ENCODE measurements at regions of chr3 and their contacts with region 1.

Region 1: DNA sequence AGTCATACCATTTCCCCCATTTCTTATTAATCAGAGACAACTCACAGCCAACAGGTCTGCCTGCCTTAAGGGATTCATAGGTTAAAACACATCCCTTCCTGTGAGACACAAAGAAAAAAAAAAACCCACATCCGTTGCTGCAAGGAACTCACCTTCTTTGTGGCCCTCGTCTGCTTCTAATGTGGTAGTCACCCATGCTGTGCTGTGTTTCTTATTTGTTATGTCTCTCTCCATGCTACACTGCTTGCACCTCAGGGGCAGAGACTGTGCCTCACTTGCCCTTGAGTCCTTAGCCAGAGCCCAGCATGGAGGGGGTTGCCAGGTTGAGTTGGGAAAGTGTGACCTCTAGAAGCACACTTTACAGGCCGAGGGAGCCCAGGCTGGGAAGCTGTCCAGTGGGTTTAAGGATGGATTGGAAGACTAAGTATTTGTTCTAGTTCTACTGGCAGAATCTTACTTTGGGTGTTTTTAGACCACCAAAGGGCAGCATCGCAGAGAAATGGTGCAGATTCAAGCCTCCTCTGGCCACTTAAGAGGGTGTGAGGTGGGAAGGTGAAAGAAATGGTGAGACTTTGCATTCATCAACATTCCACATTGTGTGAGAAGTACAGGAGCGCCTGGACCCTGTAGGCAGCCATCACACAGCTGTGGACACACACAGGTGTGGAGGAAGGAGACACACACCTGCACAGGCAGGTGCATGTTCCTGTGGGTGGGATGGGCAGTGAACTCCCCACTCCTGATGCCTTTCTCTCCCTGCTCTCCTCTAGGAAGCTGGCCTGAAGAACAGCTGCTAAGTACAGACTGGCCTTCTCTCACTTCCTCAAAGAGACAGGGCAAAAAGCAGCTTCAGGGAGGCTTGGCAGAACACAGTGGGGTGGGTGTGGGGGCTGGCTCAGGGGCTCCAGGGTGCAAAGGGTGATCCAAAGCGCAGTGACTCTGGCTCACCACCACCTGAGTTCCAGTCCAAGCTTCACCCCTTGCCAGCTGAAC is 48.8 kb downstream of the GLB1 start:
- DNase-seq: peak in 13 of 14 experiments; percentile 38 to 88 (median 52)
- ATAC-seq: peak; percentile 88
- H3K4me3 ChIP-seq: peak overlapping the region; percentile 15
- H3K4me3 Mint-ChIP-seq: peak overlapping the region; percentile 82
- H3K27ac ChIP-seq: peak overlapping the region; percentile 36 to 54
- H3K27ac Mint-ChIP-seq: peak overlapping the region; percentile 85
- H3K4me1 ChIP-seq: peaks cover 65% of the 10 kb centered on the region
- H3K4me1 Mint-ChIP-seq: peaks cover 80% of the 10 kb centered on the region
- H3K27me3 ChIP-seq: no peaks in the 10 kb centered on the region
- H3K27me3 Mint-ChIP-seq: no peaks in the 10 kb centered on the region
- CTCF ChIP-seq: no peak

Region 2: GRCh38 chr3:32960404-32961170 is 87.6 kb before region 1 on chr3:
- CTCF ChIA-PET with region 1: no interaction called
- POLR2A ChIA-PET with region 1: interaction called, 4 read pairs
- intact Hi-C with region 1: loop called in 1 of 2 experiments (anchors 5 kb)
- DNase-seq: peak in 3 of 14 experiments; percentile 60 to 71 (median 66)
- ATAC-seq: no peak
- H3K4me3 ChIP-seq: no peak overlapping the region
- H3K4me3 Mint-ChIP-seq: peak overlapping the region; percentile 65
- H3K27ac ChIP-seq: no peak overlapping the region
- H3K27ac Mint-ChIP-seq: peak overlapping the region; percentile 80
- H3K4me1 ChIP-seq: peaks cover 30% of the 10 kb centered on the region
- H3K4me1 Mint-ChIP-seq: peaks cover 35% of the 10 kb centered on the region
- H3K27me3 ChIP-seq: no peaks in the 10 kb centered on the region
- H3K27me3 Mint-ChIP-seq: no peaks in the 10 kb centered on the region
- CTCF ChIP-seq: no peak

Region 3: GRCh38 chr3:33030802-33031201 is 17.3 kb before region 1 on chr3:
- CTCF ChIA-PET with region 1: interaction called, 40 read pairs
- POLR2A ChIA-PET with region 1: interaction called, 7 read pairs
- intact Hi-C with region 1: no loop called
- DNase-seq: peak in 6 of 14 experiments; percentile 16 to 77 (median 58)
- ATAC-seq: peak; percentile 79
- H3K4me3 ChIP-seq: no peak overlapping the region
- H3K4me3 Mint-ChIP-seq: no peak overlapping the region
- H3K27ac ChIP-seq: no peak overlapping the region
- H3K27ac Mint-ChIP-seq: peak overlapping the region; percentile 50
- H3K4me1 ChIP-seq: peaks cover 18% of the 10 kb centered on the region
- H3K4me1 Mint-ChIP-seq: peaks cover 25% of the 10 kb centered on the region
- H3K27me3 ChIP-seq: no peaks in the 10 kb centered on the region
- H3K27me3 Mint-ChIP-seq: no peaks in the 10 kb centered on the region
- CTCF ChIP-seq: peak; percentile 33

Measured in CD4-positive, alpha-beta T cell (primary cell).